Naive thymus-derived CD4-positive, alpha-beta T cell (primary cell): ENCODE measurements at regions of chr5 and their contacts with region 1.

Region 1: GRCh38 chr5:149489605-149490037 is 61.6 kb downstream of the CSNK1A1 start:
- DNase-seq: no peak
- ATAC-seq: no peak
- H3K4me3 ChIP-seq: no peak overlapping the region
- H3K4me3 Mint-ChIP-seq: no peak overlapping the region
- H3K27ac ChIP-seq: no peak overlapping the region
- H3K27ac Mint-ChIP-seq: peak overlapping the region in 3 of 9 donors; percentile 1 to 71 (median 56)
- H3K4me1 ChIP-seq: no peaks in the 10 kb centered on the region
- H3K4me1 Mint-ChIP-seq: peaks cover 0 to 34% (median 9%) of the 10 kb centered on the region in 7 donors
- H3K27me3 ChIP-seq: no peaks in the 10 kb centered on the region
- H3K27me3 Mint-ChIP-seq: no peaks in the 10 kb centered on the region

Region 2: GRCh38 chr5:147805030-147805454 is 1684.6 kb before region 1 on chr5:
- CTCF ChIA-PET with region 1: no interaction called
- POLR2A ChIA-PET with region 1: no interaction called
- intact Hi-C with region 1: no loop called
- DNase-seq: peak in 1 of 9 donors; percentile 10
- ATAC-seq: peak; percentile 92
- H3K4me3 ChIP-seq: no peak overlapping the region
- H3K4me3 Mint-ChIP-seq: no peak overlapping the region
- H3K27ac ChIP-seq: no peak overlapping the region
- H3K27ac Mint-ChIP-seq: peak overlapping the region in 1 of 9 donors; percentile 13
- H3K4me1 ChIP-seq: peaks cover 0 to 8% of the 10 kb centered on the region in 2 donors
- H3K4me1 Mint-ChIP-seq: peaks cover 0 to 7% (median 0%) of the 10 kb centered on the region in 7 donors
- H3K27me3 ChIP-seq: no peaks in the 10 kb centered on the region
- H3K27me3 Mint-ChIP-seq: peaks cover 0 to 6% (median 0%) of the 10 kb centered on the region in 5 donors

Region 3: DNA sequence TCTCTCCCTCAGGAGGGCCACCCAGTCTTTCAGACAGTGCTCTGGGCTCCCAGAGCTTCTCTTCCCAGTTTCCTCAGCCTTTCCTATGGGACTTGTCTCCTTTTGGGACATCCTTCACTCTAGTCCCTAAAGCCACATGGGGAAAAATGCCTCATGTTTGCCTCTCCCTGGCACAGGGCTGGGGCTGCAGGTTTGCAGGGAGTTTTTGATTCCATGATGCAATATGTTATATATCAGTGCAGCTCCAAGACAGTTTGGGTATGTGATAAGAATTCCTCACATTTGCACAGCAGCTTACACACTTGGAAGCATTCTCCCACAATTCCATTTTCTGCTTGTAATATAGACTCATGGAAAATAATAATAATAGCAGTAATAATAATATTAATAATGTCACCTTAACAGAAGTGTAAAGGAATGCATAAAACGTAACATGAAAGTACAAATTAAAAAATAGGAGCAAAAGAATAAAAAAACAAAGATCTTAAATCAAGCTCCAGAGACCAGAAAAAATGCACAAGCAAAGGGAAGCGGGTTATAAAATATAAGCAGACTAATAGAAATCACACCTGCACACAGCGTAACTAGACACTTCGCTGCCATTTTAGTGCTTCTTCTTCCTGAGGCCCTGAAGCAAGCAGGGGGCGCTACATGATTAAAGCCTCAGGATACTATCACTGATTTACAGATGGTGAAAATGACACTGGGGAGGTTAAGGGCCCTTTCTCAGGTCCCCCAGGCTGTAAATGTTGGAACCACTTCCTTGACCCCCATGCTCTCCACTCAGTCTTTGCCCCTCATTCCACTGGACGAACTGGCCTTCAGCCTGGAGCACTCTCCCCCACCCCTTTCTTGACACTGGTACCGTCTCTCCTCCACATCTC is 40.5 kb before region 1 on chr5:
- CTCF ChIA-PET with region 1: interaction called, 4 read pairs
- POLR2A ChIA-PET with region 1: no interaction called
- intact Hi-C with region 1: loop called in 1 of 2 experiments (anchors 5 kb)
- DNase-seq: no peak
- ATAC-seq: no peak
- H3K4me3 ChIP-seq: no peak overlapping the region
- H3K4me3 Mint-ChIP-seq: no peak overlapping the region
- H3K27ac ChIP-seq: no peak overlapping the region
- H3K27ac Mint-ChIP-seq: no peak overlapping the region
- H3K4me1 ChIP-seq: no peaks in the 10 kb centered on the region
- H3K4me1 Mint-ChIP-seq: peaks cover 0 to 5% (median 0%) of the 10 kb centered on the region in 7 donors
- H3K27me3 ChIP-seq: no peaks in the 10 kb centered on the region
- H3K27me3 Mint-ChIP-seq: peaks cover 0 to 5% (median 0%) of the 10 kb centered on the region in 5 donors

Region 4: GRCh38 chr5:149504677-149505076 is 15.1 kb after region 1 on chr5:
- CTCF ChIA-PET with region 1: no interaction called
- POLR2A ChIA-PET with region 1: no interaction called
- intact Hi-C with region 1: loop called in 1 of 2 experiments (anchors 2 kb)
- DNase-seq: no peak
- ATAC-seq: no peak
- H3K4me3 ChIP-seq: no peak overlapping the region
- H3K4me3 Mint-ChIP-seq: no peak overlapping the region
- H3K27ac ChIP-seq: no peak overlapping the region
- H3K27ac Mint-ChIP-seq: no peak overlapping the region
- H3K4me1 ChIP-seq: peaks cover 0 to 8% of the 10 kb centered on the region in 2 donors
- H3K4me1 Mint-ChIP-seq: peaks cover 0 to 24% (median 15%) of the 10 kb centered on the region in 7 donors
- H3K27me3 ChIP-seq: no peaks in the 10 kb centered on the region
- H3K27me3 Mint-ChIP-seq: no peaks in the 10 kb centered on the region